ENCODE measurements at regions of chr19 and their contacts with region 1.

Region 1: DNA sequence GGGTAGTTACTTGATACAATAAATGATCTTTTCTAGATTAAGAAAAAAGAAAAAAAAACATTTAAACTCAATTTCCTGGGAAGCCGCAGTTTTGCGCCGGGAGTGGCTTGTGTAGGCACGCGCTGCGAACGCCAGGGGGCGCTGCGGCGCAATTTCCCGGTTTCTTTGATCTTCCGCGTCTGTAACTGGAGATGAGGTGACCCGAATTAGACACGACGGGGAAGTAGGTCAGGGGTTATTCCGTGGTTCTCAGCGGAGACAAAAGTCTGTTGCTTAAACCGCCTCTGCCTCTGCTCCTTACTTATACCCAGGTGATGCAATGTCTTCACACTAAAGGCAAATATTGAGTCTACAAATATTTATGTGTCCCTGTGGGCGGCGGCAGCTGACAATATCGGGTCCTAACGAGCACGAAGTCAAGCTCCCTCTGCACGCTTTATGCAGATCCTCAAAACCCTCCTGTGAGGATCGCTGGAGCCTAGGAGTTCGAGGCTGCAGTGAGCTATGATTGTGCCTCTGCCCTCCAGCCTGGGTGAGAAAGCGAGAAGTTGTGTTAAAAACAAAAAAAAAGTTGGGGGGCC is 15.2 kb downstream of the STXBP2 start:
- DNase-seq: peak; percentile 78 to 96 (median 88)
- ATAC-seq: peak; percentile 93
- H3K4me3 ChIP-seq: peak overlapping the region; percentile 34 to 45
- H3K4me3 Mint-ChIP-seq: peak overlapping the region; percentile 75
- H3K27ac ChIP-seq: peak overlapping the region in 1 of 2 experiments; percentile 28
- H3K27ac Mint-ChIP-seq: peak overlapping the region; percentile 90
- H3K4me1 ChIP-seq: peaks cover 5% of the 10 kb centered on the region
- H3K4me1 Mint-ChIP-seq: peaks cover 10% of the 10 kb centered on the region
- H3K27me3 ChIP-seq: no peaks in the 10 kb centered on the region
- H3K27me3 Mint-ChIP-seq: peaks cover 3% of the 10 kb centered on the region
- CTCF ChIP-seq: peak; percentile 99

Region 2: GRCh38 chr19:7562646-7563393 is 89.3 kb before region 1 on chr19:
- CTCF ChIA-PET with region 1: interaction called, 8 read pairs
- POLR2A ChIA-PET with region 1: no interaction called
- intact Hi-C with region 1: loop called in 1 of 2 experiments (anchors 1 kb)
- DNase-seq: peak in 1 of 9 experiments; percentile 23
- ATAC-seq: no peak
- H3K4me3 ChIP-seq: no peak overlapping the region
- H3K4me3 Mint-ChIP-seq: no peak overlapping the region
- H3K27ac ChIP-seq: no peak overlapping the region
- H3K27ac Mint-ChIP-seq: no peak overlapping the region
- H3K4me1 ChIP-seq: no peaks in the 10 kb centered on the region
- H3K4me1 Mint-ChIP-seq: no peaks in the 10 kb centered on the region
- H3K27me3 ChIP-seq: no peaks in the 10 kb centered on the region
- H3K27me3 Mint-ChIP-seq: no peaks in the 10 kb centered on the region
- CTCF ChIP-seq: no peak

Region 3: GRCh38 chr19:7590261-7590660 is 61.9 kb before region 1 on chr19:
- CTCF ChIA-PET with region 1: no interaction called
- POLR2A ChIA-PET with region 1: no interaction called
- intact Hi-C with region 1: no loop called
- DNase-seq: no peak
- ATAC-seq: no peak
- H3K4me3 ChIP-seq: no peak overlapping the region
- H3K4me3 Mint-ChIP-seq: no peak overlapping the region
- H3K27ac ChIP-seq: no peak overlapping the region
- H3K27ac Mint-ChIP-seq: no peak overlapping the region
- H3K4me1 ChIP-seq: peaks cover 1% of the 10 kb centered on the region
- H3K4me1 Mint-ChIP-seq: peaks cover 2% of the 10 kb centered on the region
- H3K27me3 ChIP-seq: peaks cover 0 to 7% of the 10 kb centered on the region in 2 experiments
- H3K27me3 Mint-ChIP-seq: peaks cover 22% of the 10 kb centered on the region
- CTCF ChIP-seq: no peak

Region 4: GRCh38 chr19:7636691-7637373 is 15.3 kb before region 1 on chr19 and contains the start of gene STXBP2:
- CTCF ChIA-PET with region 1: interaction called, 23 read pairs
- POLR2A ChIA-PET with region 1: interaction called, 5 read pairs
- intact Hi-C with region 1: loop called in 1 of 2 experiments (anchors 2 kb)
- DNase-seq: peak; percentile 89 to 99 (median 94)
- ATAC-seq: peak; percentile 99
- H3K4me3 ChIP-seq: peak within 1 kb of the TSS; percentile 36 to 93
- H3K4me3 Mint-ChIP-seq: peak within 1 kb of the TSS; percentile 85
- H3K27ac ChIP-seq: peak within 1 kb of the TSS; percentile 70 to 97
- H3K27ac Mint-ChIP-seq: peak within 1 kb of the TSS; percentile 91
- H3K4me1 ChIP-seq: peaks cover 24% of the 10 kb centered on the region
- H3K4me1 Mint-ChIP-seq: peaks cover 41% of the 10 kb centered on the region
- H3K27me3 ChIP-seq: no peaks in the 10 kb centered on the region
- H3K27me3 Mint-ChIP-seq: no peaks in the 10 kb centered on the region
- CTCF ChIP-seq: peak; percentile 34
- total RNA-seq, gene STXBP2: 260 to 270 TPM